GM12878 (cell line): ENCODE measurements at regions of chr12 and their contacts with region 1.

Region 1: GRCh38 chr12:25052196-25052913 is 103.5 kb upstream of the BCAT1 start:
- DNase-seq: peak; percentile 93
- ATAC-seq: peak; percentile 79
- H3K4me3 ChIP-seq: peak overlapping the region; percentile 83
- H3K27ac ChIP-seq: peak overlapping the region; percentile 92
- H3K4me1 ChIP-seq: peaks cover 14% of the 10 kb centered on the region; the same call in 1 of the 2 replicates
- H3K27me3 ChIP-seq: no peaks in the 10 kb centered on the region
- CTCF ChIP-seq: no peak
- EP300 ChIP-seq: peak in 1 of 2 experiments; percentile 72; a peak in 2 of 4 replicates
- POLR2A ChIP-seq: peak; percentile 72
- RAD21 ChIP-seq: no peak

Region 2: DNA sequence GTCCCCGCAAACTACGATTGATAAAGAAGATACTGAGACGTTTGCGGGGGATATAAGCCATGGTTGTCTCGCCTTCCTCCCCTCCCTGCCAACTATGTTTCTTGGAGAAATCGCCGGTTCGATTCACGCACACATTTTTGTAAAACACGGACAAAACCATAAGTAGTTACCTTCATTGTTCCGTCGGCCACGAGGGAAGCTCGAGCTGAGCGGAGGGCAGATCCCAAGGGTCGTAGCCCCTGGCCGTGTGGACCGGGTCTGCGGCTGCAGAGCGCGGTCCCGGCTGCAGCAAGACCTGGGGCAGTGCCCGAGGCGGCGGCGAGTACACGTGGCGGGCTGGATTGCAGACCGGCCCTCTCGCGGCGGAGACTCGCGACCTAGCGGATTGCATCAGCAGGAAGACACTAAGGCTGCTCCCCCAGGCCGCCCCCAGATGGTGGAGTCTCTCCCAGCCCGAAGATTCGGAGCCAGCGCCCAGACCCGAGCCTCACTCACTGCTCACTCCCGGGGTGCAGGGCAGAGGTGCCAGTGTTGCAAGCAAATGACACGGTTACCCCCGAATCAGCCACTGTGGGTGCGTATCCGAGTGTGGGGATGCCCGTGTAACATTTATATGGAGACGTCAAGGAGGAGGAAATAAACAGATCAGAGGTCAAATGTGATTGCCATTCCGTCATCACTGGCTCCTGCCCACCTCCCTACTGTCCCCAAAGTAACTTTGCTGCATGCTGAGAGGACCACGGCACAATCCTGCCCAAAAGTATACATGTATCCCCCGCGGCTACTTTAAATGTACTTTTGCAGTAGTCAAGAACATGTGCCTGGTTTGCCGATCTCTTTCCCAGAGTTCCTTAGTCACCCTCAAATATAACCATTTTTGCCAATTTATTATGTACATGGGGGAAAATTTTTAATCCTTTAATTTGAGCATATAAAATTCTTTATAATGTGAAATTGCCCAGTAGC is 103.3 kb before region 1 on chr12 and contains the start of gene BCAT1:
- CTCF ChIA-PET with region 1: interaction called, 7 read pairs
- POLR2A ChIA-PET with region 1: interaction called, 25 read pairs
- RAD21 ChIA-PET with region 1: interaction called, 11 read pairs
- SMC1A ChIA-PET with region 1: interaction called, 31 read pairs
- in situ Hi-C with region 1: no loop called
- intact Hi-C with region 1: loop called (anchors 2 kb)
- DNase-seq: no peak
- ATAC-seq: peak; percentile 41
- H3K4me3 ChIP-seq: peak within 1 kb of the TSS; percentile 85
- H3K27ac ChIP-seq: peak within 1 kb of the TSS; percentile 97
- H3K4me1 ChIP-seq: peaks cover 52% of the 10 kb centered on the region
- H3K27me3 ChIP-seq: no peaks in the 10 kb centered on the region
- CTCF ChIP-seq: peak in 2 of 3 experiments; percentile 7 to 11; a peak in 1 of 6 replicates
- EP300 ChIP-seq: no peak
- POLR2A ChIP-seq: peak; percentile 88
- RAD21 ChIP-seq: no peak
- polyA plus RNA-seq, gene BCAT1: 26.2 to 38.1 TPM

Region 3: DNA sequence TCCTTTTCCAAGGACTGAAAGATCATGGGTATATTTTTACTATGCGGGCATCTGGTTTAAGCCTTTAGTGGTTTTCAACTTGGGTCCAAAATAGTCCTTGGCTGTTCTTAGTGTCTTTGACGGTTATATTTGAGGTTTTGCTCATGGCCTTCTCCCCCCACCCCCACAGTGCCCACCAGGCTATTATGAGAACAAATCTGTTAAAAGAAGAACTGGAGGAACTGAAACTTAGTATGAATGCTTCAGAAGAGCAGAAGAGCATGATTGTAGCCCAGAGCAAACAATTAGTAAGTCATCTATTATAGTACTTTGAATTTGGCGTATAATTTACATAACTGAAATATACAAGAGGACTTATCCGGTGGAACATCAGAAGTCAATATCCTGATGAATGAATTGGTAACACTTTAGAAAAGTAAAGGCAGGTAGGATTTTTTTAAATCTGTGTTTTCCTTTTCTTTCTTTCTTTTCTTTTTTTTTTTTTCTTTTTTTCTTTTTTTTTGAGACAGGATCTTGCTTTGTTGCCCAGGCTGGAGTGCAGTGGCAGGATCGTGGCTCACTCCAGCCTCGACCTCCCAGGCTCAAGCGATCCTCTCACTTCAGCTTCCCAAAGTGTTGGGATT is 31.6 kb before region 1 on chr12:
- CTCF ChIA-PET with region 1: interaction called, 14 read pairs
- POLR2A ChIA-PET with region 1: interaction called, 39 read pairs
- RAD21 ChIA-PET with region 1: interaction called, 61 read pairs
- SMC1A ChIA-PET with region 1: interaction called, 74 read pairs
- in situ Hi-C with region 1: no loop called
- intact Hi-C with region 1: loop called (anchors 1 kb)
- DNase-seq: peak; percentile 79
- ATAC-seq: peak; percentile 94
- H3K4me3 ChIP-seq: peak overlapping the region; percentile 49; the same call in 1 of the 2 replicates
- H3K27ac ChIP-seq: peak overlapping the region; percentile 76
- H3K4me1 ChIP-seq: peaks cover 35% of the 10 kb centered on the region
- H3K27me3 ChIP-seq: no peaks in the 10 kb centered on the region
- CTCF ChIP-seq: no peak
- EP300 ChIP-seq: peak; percentile 93 to 98
- POLR2A ChIP-seq: no peak
- RAD21 ChIP-seq: no peak; the same call in 1 of the 2 replicates

Region 4: GRCh38 chr12:25063873-25064628 is 11.7 kb after region 1 on chr12:
- CTCF ChIA-PET with region 1: interaction called, 11 read pairs
- POLR2A ChIA-PET with region 1: interaction called, 31 read pairs
- RAD21 ChIA-PET with region 1: interaction called, 14 read pairs
- SMC1A ChIA-PET with region 1: interaction called, 54 read pairs
- in situ Hi-C with region 1: no loop called
- intact Hi-C with region 1: no loop called
- DNase-seq: no peak
- ATAC-seq: no peak
- H3K4me3 ChIP-seq: no peak overlapping the region
- H3K27ac ChIP-seq: no peak overlapping the region
- H3K4me1 ChIP-seq: peaks cover 32% of the 10 kb centered on the region
- H3K27me3 ChIP-seq: no peaks in the 10 kb centered on the region
- CTCF ChIP-seq: no peak
- EP300 ChIP-seq: no peak
- POLR2A ChIP-seq: no peak
- RAD21 ChIP-seq: no peak

Region 5: GRCh38 chr12:25151476-25151875 is 99.1 kb after region 1 on chr12:
- CTCF ChIA-PET with region 1: interaction called, 3 read pairs
- POLR2A ChIA-PET with region 1: interaction called, 5 read pairs
- RAD21 ChIA-PET with region 1: interaction called, 3 read pairs
- SMC1A ChIA-PET with region 1: interaction called, 10 read pairs
- in situ Hi-C with region 1: no loop called
- intact Hi-C with region 1: no loop called
- DNase-seq: no peak
- ATAC-seq: no peak
- H3K4me3 ChIP-seq: no peak overlapping the region
- H3K27ac ChIP-seq: no peak overlapping the region
- H3K4me1 ChIP-seq: peaks cover 17% of the 10 kb centered on the region
- H3K27me3 ChIP-seq: no peaks in the 10 kb centered on the region
- CTCF ChIP-seq: no peak
- EP300 ChIP-seq: no peak
- POLR2A ChIP-seq: no peak
- RAD21 ChIP-seq: no peak

Region 6: DNA sequence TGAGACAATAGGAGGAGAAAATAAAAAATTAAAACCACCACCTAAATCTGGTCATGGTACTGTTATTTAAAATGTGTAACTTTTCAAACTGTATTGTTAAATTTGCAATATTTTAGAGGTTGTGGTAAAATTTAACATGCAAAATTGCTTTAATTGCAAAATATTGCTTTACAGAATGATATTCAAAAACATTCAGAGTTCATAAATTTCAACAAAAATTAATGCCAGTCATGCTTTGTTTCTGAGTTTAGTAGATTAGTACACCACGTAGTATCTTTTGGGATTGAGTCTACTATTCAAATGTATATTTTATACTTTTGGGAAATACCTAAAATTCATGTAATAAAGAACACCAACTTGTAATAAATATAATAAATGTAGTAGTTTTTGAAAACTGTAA is 161.0 kb after region 1 on chr12:
- CTCF ChIA-PET with region 1: no interaction called
- POLR2A ChIA-PET with region 1: no interaction called
- RAD21 ChIA-PET with region 1: no interaction called
- SMC1A ChIA-PET with region 1: no interaction called
- in situ Hi-C with region 1: no loop called
- intact Hi-C with region 1: no loop called
- DNase-seq: no peak
- ATAC-seq: no peak
- H3K4me3 ChIP-seq: no peak overlapping the region
- H3K27ac ChIP-seq: no peak overlapping the region
- H3K4me1 ChIP-seq: no peaks in the 10 kb centered on the region
- H3K27me3 ChIP-seq: no peaks in the 10 kb centered on the region
- CTCF ChIP-seq: no peak
- EP300 ChIP-seq: no peak
- POLR2A ChIP-seq: no peak
- RAD21 ChIP-seq: no peak

Region 7: GRCh38 chr12:25825446-25825845 is 773.1 kb after region 1 on chr12:
- CTCF ChIA-PET with region 1: no interaction called
- POLR2A ChIA-PET with region 1: no interaction called
- RAD21 ChIA-PET with region 1: no interaction called
- SMC1A ChIA-PET with region 1: no interaction called
- in situ Hi-C with region 1: no loop called
- intact Hi-C with region 1: no loop called
- DNase-seq: no peak
- ATAC-seq: no peak
- H3K4me3 ChIP-seq: no peak overlapping the region
- H3K27ac ChIP-seq: no peak overlapping the region
- H3K4me1 ChIP-seq: no peaks in the 10 kb centered on the region
- H3K27me3 ChIP-seq: no peaks in the 10 kb centered on the region; a peak in 1 of 4 replicates
- CTCF ChIP-seq: no peak
- EP300 ChIP-seq: no peak
- POLR2A ChIP-seq: no peak
- RAD21 ChIP-seq: 0 out of 2 replicates have a peak, but pooled peaks have one; percentile 17